Naive thymus-derived CD4-positive, alpha-beta T cell (primary cell): ENCODE measurements at regions of chr5 and their contacts with region 1.

Region 1: GRCh38 chr5:173155912-173156311 is 11.6 kb downstream of the BNIP1 start:
- DNase-seq: no peak
- ATAC-seq: no peak
- H3K4me3 ChIP-seq: no peak overlapping the region
- H3K4me3 Mint-ChIP-seq: no peak overlapping the region
- H3K27ac ChIP-seq: no peak overlapping the region
- H3K27ac Mint-ChIP-seq: no peak overlapping the region
- H3K4me1 ChIP-seq: no peaks in the 10 kb centered on the region
- H3K4me1 Mint-ChIP-seq: no peaks in the 10 kb centered on the region
- H3K27me3 ChIP-seq: no peaks in the 10 kb centered on the region
- H3K27me3 Mint-ChIP-seq: no peaks in the 10 kb centered on the region

Region 2: DNA sequence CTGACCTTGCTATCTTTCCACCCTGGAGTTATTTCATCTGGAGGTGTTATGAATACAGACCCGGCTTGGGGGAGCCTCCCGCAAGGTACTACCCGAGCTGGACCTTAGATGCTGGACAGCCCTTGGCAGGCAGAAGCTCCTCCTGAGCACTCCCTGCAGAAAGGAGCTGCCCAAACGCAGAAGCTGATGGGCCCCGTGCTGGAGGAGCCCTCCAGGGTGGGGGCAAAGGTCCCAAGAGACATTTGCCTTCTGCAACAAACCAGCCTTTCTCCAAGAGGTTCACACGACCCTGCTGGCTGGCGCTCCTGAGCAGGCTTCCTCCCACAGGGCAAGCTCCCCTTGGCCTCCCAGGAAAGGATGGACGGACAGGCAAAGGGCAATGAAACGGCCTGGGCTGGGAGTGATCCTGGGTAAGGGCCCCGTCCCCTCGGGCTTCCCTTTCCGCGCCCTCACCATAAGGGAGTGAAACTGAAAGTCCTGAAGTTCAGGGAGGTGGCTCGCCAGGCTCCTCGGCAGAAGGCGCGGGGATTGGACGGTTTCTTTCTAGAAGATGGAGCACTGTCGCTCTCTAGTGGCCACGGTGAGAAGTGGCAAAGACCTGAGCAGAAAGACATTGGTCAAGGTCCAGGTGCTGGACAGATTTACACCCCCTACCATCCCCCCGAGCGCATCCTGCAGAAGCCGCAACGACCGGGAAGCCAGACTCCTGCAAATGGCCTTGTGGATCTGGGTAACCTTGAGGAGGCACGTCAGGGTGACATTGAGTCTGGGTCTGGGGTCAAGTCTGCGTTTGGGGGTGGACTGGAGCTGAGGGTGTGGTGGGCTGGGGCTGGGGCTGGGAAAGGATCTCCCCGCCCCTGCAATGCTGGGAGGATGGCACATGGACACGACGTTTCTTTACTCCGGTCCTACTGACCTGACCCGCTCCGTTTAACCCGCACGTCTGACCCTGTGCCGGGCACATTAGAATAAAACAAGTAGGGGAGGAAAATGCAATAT is 458.5 kb before region 1 on chr5:
- CTCF ChIA-PET with region 1: no interaction called
- POLR2A ChIA-PET with region 1: no interaction called
- intact Hi-C with region 1: no loop called
- DNase-seq: peak; percentile 64 to 85 (median 80)
- ATAC-seq: peak; percentile 98
- H3K4me3 ChIP-seq: peak overlapping the region; percentile 78
- H3K4me3 Mint-ChIP-seq: peak overlapping the region; percentile 77 to 96 (median 94)
- H3K27ac ChIP-seq: peak overlapping the region; percentile 72
- H3K27ac Mint-ChIP-seq: peak overlapping the region; percentile 88 to 98 (median 95)
- H3K4me1 ChIP-seq: peaks cover 5 to 10% of the 10 kb centered on the region in 2 donors
- H3K4me1 Mint-ChIP-seq: peaks cover 0 to 24% (median 20%) of the 10 kb centered on the region in 7 donors
- H3K27me3 ChIP-seq: no peaks in the 10 kb centered on the region
- H3K27me3 Mint-ChIP-seq: peaks cover 6 to 26% (median 15%) of the 10 kb centered on the region in 5 donors

Region 3: GRCh38 chr5:173283318-173284288 is 127.7 kb after region 1 on chr5:
- CTCF ChIA-PET with region 1: no interaction called
- POLR2A ChIA-PET with region 1: no interaction called
- intact Hi-C with region 1: loop called in 1 of 2 experiments (anchors 10 kb)
- DNase-seq: peak; percentile 51 to 72 (median 69)
- ATAC-seq: peak; percentile 96
- H3K4me3 ChIP-seq: no peak overlapping the region
- H3K4me3 Mint-ChIP-seq: peak overlapping the region in 8 of 10 donors; percentile 10 to 81 (median 50)
- H3K27ac ChIP-seq: no peak overlapping the region
- H3K27ac Mint-ChIP-seq: no peak overlapping the region
- H3K4me1 ChIP-seq: no peaks in the 10 kb centered on the region
- H3K4me1 Mint-ChIP-seq: peaks cover 0 to 21% (median 7%) of the 10 kb centered on the region in 7 donors
- H3K27me3 ChIP-seq: no peaks in the 10 kb centered on the region
- H3K27me3 Mint-ChIP-seq: peaks cover 62 to 79% (median 71%) of the 10 kb centered on the region in 5 donors